ENCODE measurements at regions of chr10 and their contacts with region 1.

Region 1: DNA sequence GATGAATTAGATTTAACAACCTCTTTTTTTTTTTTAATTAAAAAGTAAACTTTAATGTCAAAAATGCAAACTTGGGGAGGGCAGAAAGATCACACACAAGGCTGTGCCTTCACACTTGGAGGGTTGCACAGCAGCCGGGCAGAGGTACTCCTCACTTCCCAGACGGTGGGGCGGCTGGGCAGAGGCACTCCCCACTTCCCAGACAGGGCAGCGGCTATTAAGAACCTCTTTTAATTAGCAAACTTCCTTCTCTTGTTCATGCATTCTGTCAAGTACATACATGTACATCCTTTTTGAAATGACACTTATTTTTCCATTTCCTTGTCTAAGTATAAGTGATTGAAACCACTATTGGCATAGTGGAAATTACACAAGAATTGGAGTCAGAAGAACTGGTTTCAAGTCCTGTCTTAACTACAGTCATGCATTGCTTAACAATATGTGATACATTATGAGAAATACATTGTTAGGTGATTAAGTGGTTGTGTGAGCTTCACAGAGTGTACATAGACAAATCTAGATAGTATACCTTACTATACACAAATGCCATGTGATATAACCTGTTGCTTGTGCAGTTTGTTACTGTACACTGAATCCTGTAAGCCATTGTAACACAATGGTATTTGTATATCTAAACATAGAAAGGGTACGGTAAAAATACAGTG is 26.5 kb downstream of the BTRC start:
- DNase-seq: no peak
- H3K4me3 Mint-ChIP-seq: no peak overlapping the region
- H3K27ac Mint-ChIP-seq: peak overlapping the region; percentile 84
- H3K4me1 Mint-ChIP-seq: peaks cover 9% of the 10 kb centered on the region
- H3K27me3 Mint-ChIP-seq: no peaks in the 10 kb centered on the region

Region 2: DNA sequence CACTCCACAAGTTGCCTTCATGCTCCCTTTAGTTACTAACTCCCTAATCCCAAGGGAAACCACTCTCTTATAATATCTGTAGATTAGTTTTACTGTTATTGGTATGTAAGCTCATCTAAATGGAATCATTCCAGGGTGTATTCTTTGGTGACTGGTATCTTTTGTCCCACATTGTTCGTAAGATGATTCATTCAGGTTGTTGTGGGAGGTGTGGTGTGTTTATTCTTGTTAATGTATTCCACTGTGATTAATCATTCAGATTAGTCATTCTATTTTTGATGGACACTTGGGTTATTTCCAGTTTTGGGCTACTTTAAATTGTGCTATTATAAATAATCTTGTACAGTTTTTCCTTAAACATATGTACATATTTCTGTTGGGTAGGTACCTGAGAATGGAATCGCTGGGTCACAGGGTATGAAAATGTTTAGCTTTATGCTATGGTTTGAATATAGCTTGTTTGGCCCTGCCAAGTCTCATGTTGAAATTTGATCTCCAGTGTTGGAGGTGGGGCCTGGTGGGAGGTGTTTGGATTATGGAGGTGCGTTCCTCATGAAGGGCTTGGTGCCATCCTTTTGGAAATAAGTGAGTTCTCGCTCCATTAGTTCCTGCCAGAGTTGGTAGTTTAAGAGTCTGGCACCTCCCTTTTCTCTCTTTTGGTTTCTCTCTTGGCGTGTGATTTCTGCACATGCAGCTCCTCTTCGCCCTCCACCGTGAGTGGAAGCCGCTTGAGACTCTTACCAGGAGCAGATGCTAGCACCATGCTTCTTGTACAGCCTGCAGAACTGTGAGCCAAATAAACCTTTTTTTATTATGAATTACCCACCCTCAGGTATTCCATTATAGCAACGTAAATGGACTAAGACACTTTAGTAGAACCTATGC is 12.7 kb before region 1 on chr10:
- intact Hi-C with region 1: loop called (anchors 1 kb)
- DNase-seq: no peak
- H3K4me3 Mint-ChIP-seq: no peak overlapping the region
- H3K27ac Mint-ChIP-seq: peak overlapping the region; percentile 29
- H3K4me1 Mint-ChIP-seq: peaks cover 11% of the 10 kb centered on the region
- H3K27me3 Mint-ChIP-seq: no peaks in the 10 kb centered on the region

Region 3: GRCh38 chr10:101397140-101397539 is 16.7 kb after region 1 on chr10:
- intact Hi-C with region 1: loop called (anchors 2 kb)
- DNase-seq: peak; percentile 14
- H3K4me3 Mint-ChIP-seq: no peak overlapping the region
- H3K27ac Mint-ChIP-seq: no peak overlapping the region
- H3K4me1 Mint-ChIP-seq: peaks cover 8% of the 10 kb centered on the region
- H3K27me3 Mint-ChIP-seq: no peaks in the 10 kb centered on the region

Region 4: GRCh38 chr10:101709359-101710058 is 329.0 kb after region 1 on chr10:
- intact Hi-C with region 1: loop called (anchors 10 kb)
- DNase-seq: no peak
- H3K4me3 Mint-ChIP-seq: no peak overlapping the region
- H3K27ac Mint-ChIP-seq: no peak overlapping the region
- H3K4me1 Mint-ChIP-seq: peaks cover 31% of the 10 kb centered on the region
- H3K27me3 Mint-ChIP-seq: peaks cover 50% of the 10 kb centered on the region

Region 5: GRCh38 chr10:102432162-102432950 is 1051.9 kb after region 1 on chr10 and contains the start of gene CUEDC2:
- intact Hi-C with region 1: no loop called
- DNase-seq: peak; percentile 95
- H3K4me3 Mint-ChIP-seq: peak within 1 kb of the TSS; percentile 95
- H3K27ac Mint-ChIP-seq: peak within 1 kb of the TSS; percentile 94
- H3K4me1 Mint-ChIP-seq: peaks cover 55% of the 10 kb centered on the region
- H3K27me3 Mint-ChIP-seq: no peaks in the 10 kb centered on the region
- total RNA-seq, gene CUEDC2: 59.0 and 59.4 TPM in 2 replicates

Measured in activated T-helper 1 cell treated with anti-CD3 and anti-CD28 coated beads, Interleukin-12 subunit alpha, Interleukin-12 subunit beta, Interleukin-2, Interleukin-4 antibody, amounts not matched to agents 30 ng/mL and 10 ng/mL and 1 ng/mL, durations not matched to agents 14 hours and 24 hours and 36 hours (primary cell).